Activated CD8-positive, alpha-beta T cell treated with anti-CD3 and anti-CD28 coated beads, Interleukin-2, amount 10 ng/mL, durations not matched to agents 7 days and 5 days (primary cell): ENCODE measurements at regions of chr12 and their contacts with region 1.

Region 1: GRCh38 chr12:67286257-67286656 is 17.1 kb downstream of the CAND1 start:
- DNase-seq: no peak
- ATAC-seq: no peak
- H3K4me3 Mint-ChIP-seq: no peak overlapping the region
- H3K27ac Mint-ChIP-seq: no peak overlapping the region
- H3K4me1 Mint-ChIP-seq: peaks cover 26% of the 10 kb centered on the region
- H3K27me3 Mint-ChIP-seq: no peaks in the 10 kb centered on the region

Region 2: GRCh38 chr12:67268896-67269631 is 17.2 kb before region 1 on chr12 and contains the start of gene CAND1:
- CTCF ChIA-PET with region 1: interaction called, 6 read pairs
- POLR2A ChIA-PET with region 1: interaction called, 10 read pairs
- DNase-seq: peak; percentile 97
- ATAC-seq: peak; percentile 80
- H3K4me3 Mint-ChIP-seq: peak within 1 kb of the TSS; percentile 95
- H3K27ac Mint-ChIP-seq: peak within 1 kb of the TSS; percentile 97
- H3K4me1 Mint-ChIP-seq: peaks cover 32% of the 10 kb centered on the region
- H3K27me3 Mint-ChIP-seq: no peaks in the 10 kb centered on the region
- total RNA-seq, gene CAND1: 153 to 165 TPM

Region 3: DNA sequence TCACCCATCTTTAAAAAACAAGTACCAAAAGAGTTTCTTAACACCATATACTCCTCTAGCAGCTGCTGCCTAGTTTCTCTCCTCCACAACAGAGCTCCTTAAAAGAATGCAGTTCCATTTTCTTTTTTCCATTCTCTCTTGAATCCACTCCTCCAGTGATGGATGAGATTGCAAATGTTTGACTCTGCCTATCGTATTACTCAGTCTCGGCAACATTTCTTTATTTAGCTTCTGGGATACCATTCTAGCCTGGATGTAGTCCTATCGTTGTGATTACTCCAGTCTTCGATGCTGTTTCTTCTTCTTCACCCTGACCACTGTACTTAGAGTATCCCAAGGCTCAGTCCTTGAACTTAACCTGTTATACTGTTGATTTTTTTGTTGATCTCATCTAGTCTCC is 13.7 kb after region 1 on chr12:
- CTCF ChIA-PET with region 1: no interaction called
- POLR2A ChIA-PET with region 1: no interaction called
- DNase-seq: no peak
- ATAC-seq: no peak
- H3K4me3 Mint-ChIP-seq: no peak overlapping the region
- H3K27ac Mint-ChIP-seq: no peak overlapping the region
- H3K4me1 Mint-ChIP-seq: no peaks in the 10 kb centered on the region
- H3K27me3 Mint-ChIP-seq: no peaks in the 10 kb centered on the region